ENCODE measurements at regions of chr7 and their contacts with region 1.

Region 1: DNA sequence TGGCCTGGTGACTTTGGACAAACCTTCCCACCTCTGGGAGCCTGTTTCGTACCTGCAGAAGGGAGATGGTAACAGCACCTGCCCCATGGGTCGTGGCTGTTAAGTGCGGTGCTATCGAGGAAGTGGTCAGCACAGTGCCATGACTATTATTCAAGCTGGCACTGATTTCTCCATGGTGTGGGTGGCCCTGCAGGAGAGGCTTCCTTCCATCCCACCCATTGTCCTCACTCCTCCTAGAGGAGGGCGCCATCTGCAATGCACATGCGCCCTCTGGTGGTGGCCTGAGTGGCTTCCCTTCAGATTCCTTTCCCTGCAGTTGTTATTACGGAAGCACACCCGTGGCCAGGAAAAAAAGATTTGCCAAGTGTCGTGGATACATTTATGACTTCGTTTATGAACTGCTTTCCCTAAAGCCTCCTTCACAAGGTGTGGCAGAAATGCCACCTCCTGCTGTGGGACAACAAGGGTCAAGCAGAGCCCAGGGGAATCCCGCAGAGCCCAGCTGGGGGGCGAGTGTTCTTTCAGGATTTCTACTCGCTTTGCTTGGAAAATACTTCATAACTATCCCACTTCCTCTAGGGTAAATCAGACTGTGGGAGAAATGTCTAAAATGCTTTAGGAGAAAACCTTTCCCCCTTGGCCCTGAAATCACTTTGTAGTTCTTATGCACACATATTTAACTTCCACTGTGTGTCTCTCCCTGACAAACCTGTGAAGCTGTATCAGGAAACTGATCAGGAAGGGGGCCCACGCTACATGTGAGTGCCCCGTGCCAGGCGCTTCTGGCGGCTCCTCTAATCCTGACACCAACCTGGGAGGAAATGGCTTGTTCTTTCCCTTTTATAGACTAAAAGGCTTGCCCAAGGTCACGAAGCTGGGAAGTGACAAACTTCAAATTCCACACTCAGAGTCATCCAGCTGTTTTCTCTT is 98.0 kb upstream of the ANLN start:
- DNase-seq: peak; percentile 87
- ATAC-seq: peak; percentile 53
- H3K4me3 Mint-ChIP-seq: peak overlapping the region; percentile 54
- H3K27ac Mint-ChIP-seq: peak overlapping the region; percentile 2
- H3K4me1 Mint-ChIP-seq: peaks cover 42% of the 10 kb centered on the region
- H3K27me3 Mint-ChIP-seq: no peaks in the 10 kb centered on the region

Region 2: DNA sequence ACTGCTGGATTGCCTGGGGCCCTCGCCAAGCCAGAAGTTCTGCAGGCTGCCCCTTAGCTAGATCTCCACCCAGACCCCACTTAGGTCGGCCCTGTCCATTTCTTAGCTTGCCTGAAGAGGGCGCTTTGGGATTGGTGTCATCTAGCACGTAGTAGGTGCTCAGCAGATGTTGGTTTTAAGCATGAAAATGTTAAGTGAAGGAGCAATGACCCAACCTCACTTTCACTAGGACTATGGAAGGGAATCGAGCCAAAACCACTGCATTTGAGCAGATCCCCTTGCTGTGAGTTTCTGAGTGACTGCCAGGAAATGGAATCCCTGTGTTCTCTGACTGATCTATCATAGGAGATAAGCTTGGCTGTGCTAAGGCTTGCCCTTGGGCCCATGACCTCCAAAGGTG is 270.3 kb before region 1 on chr7:
- CTCF ChIA-PET with region 1: interaction called, 4 read pairs
- POLR2A ChIA-PET with region 1: no interaction called
- intact Hi-C with region 1: loop called in 1 of 2 experiments (anchors 1 kb)
- DNase-seq: peak; percentile 40
- ATAC-seq: no peak
- H3K4me3 Mint-ChIP-seq: no peak overlapping the region
- H3K27ac Mint-ChIP-seq: no peak overlapping the region
- H3K4me1 Mint-ChIP-seq: no peaks in the 10 kb centered on the region
- H3K27me3 Mint-ChIP-seq: no peaks in the 10 kb centered on the region

Region 3: GRCh38 chr7:36127075-36127740 is 164.4 kb before region 1 on chr7:
- CTCF ChIA-PET with region 1: interaction called, 3 read pairs
- POLR2A ChIA-PET with region 1: no interaction called
- intact Hi-C with region 1: loop called (anchors 1 kb)
- DNase-seq: peak; percentile 31
- ATAC-seq: peak; percentile 77
- H3K4me3 Mint-ChIP-seq: no peak overlapping the region
- H3K27ac Mint-ChIP-seq: no peak overlapping the region
- H3K4me1 Mint-ChIP-seq: peaks cover 2% of the 10 kb centered on the region
- H3K27me3 Mint-ChIP-seq: peaks cover 3% of the 10 kb centered on the region

Region 4: DNA sequence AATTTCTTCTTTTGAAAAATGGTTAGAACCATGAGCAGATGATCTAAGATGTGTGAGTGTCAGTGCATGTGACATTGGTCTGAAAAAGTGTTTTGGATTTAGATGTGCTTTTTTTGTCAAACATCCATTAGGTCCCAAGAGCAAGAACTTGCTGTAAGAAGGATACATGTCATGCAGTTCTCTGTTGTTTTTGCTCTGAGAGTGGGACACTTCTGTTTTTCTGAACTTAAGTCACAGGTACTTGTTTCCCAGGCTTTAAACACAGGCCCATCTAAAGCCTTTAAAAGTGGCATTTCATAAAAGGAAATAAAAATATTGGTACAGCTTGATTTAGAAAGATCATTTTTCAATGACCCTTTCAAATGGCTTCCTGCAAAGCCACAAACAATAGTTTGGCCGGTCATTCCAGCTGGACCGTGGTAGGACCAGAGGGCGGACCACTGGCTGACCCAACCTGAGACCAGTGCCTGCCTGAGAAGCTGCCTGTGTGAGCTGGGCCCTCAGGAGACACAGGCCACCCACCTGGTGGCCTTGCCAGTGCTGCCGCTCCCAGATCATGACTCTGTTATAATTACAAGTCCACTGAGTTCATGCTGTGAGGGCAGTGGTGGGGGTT is 45.9 kb before region 1 on chr7:
- CTCF ChIA-PET with region 1: no interaction called
- POLR2A ChIA-PET with region 1: no interaction called
- intact Hi-C with region 1: no loop called
- DNase-seq: no peak
- ATAC-seq: no peak
- H3K4me3 Mint-ChIP-seq: no peak overlapping the region
- H3K27ac Mint-ChIP-seq: no peak overlapping the region
- H3K4me1 Mint-ChIP-seq: no peaks in the 10 kb centered on the region
- H3K27me3 Mint-ChIP-seq: no peaks in the 10 kb centered on the region

Region 5: GRCh38 chr7:36301914-36302771 is 10.5 kb after region 1 on chr7:
- CTCF ChIA-PET with region 1: interaction called, 11 read pairs
- POLR2A ChIA-PET with region 1: no interaction called
- intact Hi-C with region 1: no loop called
- DNase-seq: no peak
- ATAC-seq: no peak
- H3K4me3 Mint-ChIP-seq: no peak overlapping the region
- H3K27ac Mint-ChIP-seq: no peak overlapping the region
- H3K4me1 Mint-ChIP-seq: no peaks in the 10 kb centered on the region
- H3K27me3 Mint-ChIP-seq: no peaks in the 10 kb centered on the region

Region 6: DNA sequence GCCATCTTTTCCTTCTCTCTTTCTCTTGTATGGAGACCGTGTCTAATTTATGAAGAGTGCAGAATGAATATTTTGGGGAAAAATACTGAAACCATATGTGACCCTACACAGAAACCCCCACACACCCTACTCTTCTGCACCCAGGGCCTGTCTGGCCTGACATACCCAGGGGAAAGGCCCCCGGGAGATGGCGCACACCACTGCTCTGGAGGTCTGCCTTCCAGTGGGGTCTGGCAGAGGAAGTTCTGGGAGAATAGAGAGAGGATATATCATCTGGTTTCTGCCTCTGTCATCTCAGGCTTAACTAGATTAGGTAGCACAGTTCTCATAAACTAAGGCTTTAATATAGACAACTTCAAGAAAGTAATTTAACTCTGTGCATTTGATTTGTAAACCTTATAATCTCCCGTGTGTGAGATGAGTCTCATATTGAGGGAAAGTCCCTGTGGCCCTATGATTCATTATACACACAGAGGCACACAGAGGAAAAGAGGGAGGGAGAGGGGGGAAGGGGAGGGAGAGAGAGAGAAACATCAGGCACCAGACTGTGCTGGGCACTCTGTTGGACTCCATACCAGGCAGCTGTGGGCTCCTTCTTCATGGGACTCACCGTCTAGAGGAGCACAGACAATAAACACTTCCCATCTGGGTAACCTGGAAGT is 309.3 kb after region 1 on chr7:
- CTCF ChIA-PET with region 1: no interaction called
- POLR2A ChIA-PET with region 1: no interaction called
- intact Hi-C with region 1: no loop called
- DNase-seq: peak; percentile 52
- ATAC-seq: peak; percentile 89
- H3K4me3 Mint-ChIP-seq: no peak overlapping the region
- H3K27ac Mint-ChIP-seq: peak overlapping the region; percentile 35
- H3K4me1 Mint-ChIP-seq: peaks cover 65% of the 10 kb centered on the region
- H3K27me3 Mint-ChIP-seq: no peaks in the 10 kb centered on the region

Measured in activated CD4-positive, alpha-beta T cell treated with anti-CD3 and anti-CD28 coated beads for 36 hours (primary cell).